ENCODE measurements at regions of chr20 and their contacts with region 1.

Region 1: DNA sequence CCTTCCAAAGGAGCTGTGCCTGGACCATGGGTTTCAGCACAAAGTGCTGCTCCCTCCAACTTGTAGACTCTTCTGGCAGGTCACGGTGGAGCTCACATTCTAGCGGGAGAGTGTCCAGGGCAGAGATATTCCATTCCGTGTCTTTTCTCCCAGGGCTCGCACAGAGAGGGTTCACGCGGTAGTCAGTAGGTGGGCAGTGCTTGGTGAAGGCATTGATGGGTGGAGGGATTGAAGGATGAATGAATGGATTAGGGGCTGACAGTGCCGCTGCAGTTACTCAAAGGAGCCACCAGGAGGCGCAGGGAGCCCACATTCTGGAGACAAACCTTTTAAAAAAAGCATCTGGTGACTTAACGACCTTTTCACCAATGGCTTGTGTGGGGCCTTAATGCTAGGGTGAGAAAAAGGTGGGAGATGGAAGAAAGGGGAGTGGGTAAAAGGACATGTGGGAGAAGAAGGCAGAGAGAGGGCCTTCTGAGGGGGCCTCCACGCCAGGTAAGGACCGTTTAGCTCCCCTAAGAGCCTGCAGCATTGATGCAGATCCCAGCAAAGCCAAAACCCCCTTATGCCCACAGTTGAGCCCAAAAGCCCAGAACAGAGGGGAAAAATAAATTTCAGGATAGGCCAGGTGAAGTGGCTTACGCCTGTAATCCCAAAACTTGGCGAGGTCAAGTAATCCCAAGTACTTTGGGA is 17.5 kb upstream of the FAM110A start:
- DNase-seq: peak; percentile 62 to 83 (median 65)
- H3K4me3 ChIP-seq: no peak overlapping the region
- H3K27ac ChIP-seq: no peak overlapping the region
- H3K4me1 ChIP-seq: no peaks in the 10 kb centered on the region
- H3K27me3 ChIP-seq: no peaks in the 10 kb centered on the region
- CTCF ChIP-seq: peak; percentile 99

Region 2: GRCh38 chr20:354298-355064 is 461.6 kb before region 1 on chr20:
- intact Hi-C with region 1: no loop called
- DNase-seq: peak; percentile 83 to 92 (median 86)
- H3K4me3 ChIP-seq: no peak overlapping the region
- H3K27ac ChIP-seq: no peak overlapping the region
- H3K4me1 ChIP-seq: no peaks in the 10 kb centered on the region
- H3K27me3 ChIP-seq: no peaks in the 10 kb centered on the region
- CTCF ChIP-seq: peak; percentile 95

Region 3: GRCh38 chr20:688809-689212 is 127.2 kb before region 1 on chr20:
- intact Hi-C with region 1: no loop called
- DNase-seq: peak in 4 of 5 donors; percentile 35 to 61 (median 56)
- H3K4me3 ChIP-seq: no peak overlapping the region
- H3K27ac ChIP-seq: no peak overlapping the region
- H3K4me1 ChIP-seq: no peaks in the 10 kb centered on the region
- H3K27me3 ChIP-seq: no peaks in the 10 kb centered on the region
- CTCF ChIP-seq: no peak

Region 4: GRCh38 chr20:956330-956951 is 140.4 kb after region 1 on chr20:
- intact Hi-C with region 1: loop called (anchors 5 kb)
- DNase-seq: peak; percentile 77 to 83 (median 81)
- H3K4me3 ChIP-seq: no peak overlapping the region
- H3K27ac ChIP-seq: no peak overlapping the region
- H3K4me1 ChIP-seq: peaks cover 0 to 3% (median 2%) of the 10 kb centered on the region in 3 donors
- H3K27me3 ChIP-seq: peaks cover 3% of the 10 kb centered on the region
- CTCF ChIP-seq: peak; percentile 92